Right cardiac atrium (tissue), 5 donors: ENCODE measurements at regions of chr13 and their contacts with region 1.

Region 1: DNA sequence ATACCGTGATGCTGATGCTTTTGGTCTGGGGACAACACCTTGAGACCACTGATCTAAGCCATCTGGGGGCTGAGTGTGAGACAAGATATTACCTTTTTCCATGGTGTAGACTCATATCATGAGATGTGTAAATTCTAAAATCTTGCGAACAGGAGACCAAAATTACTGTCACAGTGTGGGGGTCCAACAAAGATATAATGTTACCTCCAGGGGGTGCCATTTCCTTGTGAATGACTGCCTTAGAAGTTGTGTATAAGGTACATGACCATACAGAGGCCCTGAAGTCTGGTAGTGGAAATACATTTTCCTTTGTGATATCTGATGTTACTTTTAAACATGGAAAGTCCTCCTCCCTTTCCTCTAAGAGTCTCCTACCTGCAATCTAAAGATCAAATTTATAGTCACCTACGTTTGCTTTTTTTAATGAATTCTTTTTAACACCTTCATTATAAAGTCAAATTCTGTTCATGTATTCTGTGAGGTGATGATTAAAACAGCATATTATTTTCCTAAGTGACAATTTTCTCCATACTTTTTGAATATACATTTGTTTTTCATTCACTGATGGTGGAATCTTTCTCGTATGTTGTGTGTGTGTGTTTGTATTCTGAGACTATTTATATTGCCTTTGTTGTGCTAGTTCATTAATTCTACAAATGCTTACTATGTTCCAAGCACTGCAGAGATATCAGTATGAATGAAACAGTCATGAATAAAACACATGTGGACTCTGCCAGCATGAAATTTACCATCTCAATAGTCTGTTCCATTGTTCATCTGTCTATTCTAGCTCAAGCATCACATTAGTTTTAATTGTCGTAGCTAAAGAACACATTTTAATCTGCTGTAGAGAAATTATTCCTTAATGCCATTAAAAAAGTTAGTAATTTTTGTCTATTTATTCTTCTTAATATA is 113.7 kb downstream of the RFC3 start:
- DNase-seq: no peak
- ATAC-seq: peak; percentile 70 to 79
- H3K4me3 ChIP-seq: no peak overlapping the region
- H3K27ac ChIP-seq: no peak overlapping the region
- H3K4me1 ChIP-seq: peaks cover 2% of the 10 kb centered on the region
- H3K27me3 ChIP-seq: no peaks in the 10 kb centered on the region

Region 2: GRCh38 chr13:33723772-33724435 is 207.8 kb before region 1 on chr13:
- intact Hi-C with region 1: no loop called
- DNase-seq: peak; percentile 68 to 82 (median 69)
- ATAC-seq: peak; percentile 82 to 84
- H3K4me3 ChIP-seq: no peak overlapping the region
- H3K27ac ChIP-seq: no peak overlapping the region
- H3K4me1 ChIP-seq: peaks cover 2% of the 10 kb centered on the region
- H3K27me3 ChIP-seq: no peaks in the 10 kb centered on the region

Region 3: DNA sequence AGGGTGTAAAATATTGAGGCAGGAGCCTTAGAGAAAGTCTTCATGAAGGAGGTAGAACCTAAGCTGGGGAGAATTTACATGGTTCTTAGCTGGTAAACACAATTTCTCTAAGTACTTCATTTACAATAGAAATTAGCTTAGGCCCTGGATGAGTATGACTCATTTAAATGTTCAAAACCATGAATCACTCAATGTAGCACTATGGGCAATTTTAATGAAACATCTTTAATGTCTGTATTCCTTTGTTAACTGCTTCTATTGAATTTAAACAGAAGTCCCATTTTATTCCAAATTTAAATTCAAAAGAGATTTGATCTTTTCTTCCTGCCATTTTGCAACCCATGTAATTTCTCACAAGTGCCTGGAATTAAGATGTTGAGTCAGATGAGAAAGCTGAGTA is 138.4 kb after region 1 on chr13:
- intact Hi-C with region 1: loop called in 2 of 4 experiments (anchors 5 to 10 kb)
- DNase-seq: no peak
- ATAC-seq: no peak
- H3K4me3 ChIP-seq: no peak overlapping the region
- H3K27ac ChIP-seq: no peak overlapping the region
- H3K4me1 ChIP-seq: no peaks in the 10 kb centered on the region
- H3K27me3 ChIP-seq: no peaks in the 10 kb centered on the region

Region 4: GRCh38 chr13:34076943-34077703 is 145.5 kb after region 1 on chr13:
- intact Hi-C with region 1: loop called in 2 of 4 experiments (anchors 5 to 10 kb)
- DNase-seq: no peak
- ATAC-seq: peak in 1 of 2 donors; percentile 50
- H3K4me3 ChIP-seq: no peak overlapping the region
- H3K27ac ChIP-seq: no peak overlapping the region
- H3K4me1 ChIP-seq: peaks cover 3% of the 10 kb centered on the region
- H3K27me3 ChIP-seq: no peaks in the 10 kb centered on the region

Region 5: DNA sequence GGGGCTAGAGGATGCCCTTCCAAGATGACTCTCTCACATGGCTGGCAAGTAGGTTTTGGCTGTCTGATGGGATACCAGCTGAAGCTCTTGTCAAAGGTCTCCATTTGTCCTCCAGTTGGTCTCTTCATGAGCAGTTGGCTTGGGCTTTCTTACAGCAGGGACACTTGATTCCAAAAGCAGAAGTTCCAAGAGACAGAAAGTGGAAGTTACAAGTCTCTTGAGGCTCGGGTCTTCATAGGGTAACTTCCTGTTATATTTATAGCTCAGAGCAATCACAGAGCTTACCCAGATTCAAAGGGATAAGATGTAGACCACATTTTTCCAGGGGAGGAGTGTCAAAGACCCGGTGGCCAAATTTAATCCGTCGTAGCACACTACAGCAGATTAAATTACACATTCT is 326.3 kb after region 1 on chr13:
- intact Hi-C with region 1: no loop called
- DNase-seq: no peak
- ATAC-seq: peak; percentile 11 to 22
- H3K4me3 ChIP-seq: no peak overlapping the region
- H3K27ac ChIP-seq: no peak overlapping the region
- H3K4me1 ChIP-seq: peaks cover 1% of the 10 kb centered on the region
- H3K27me3 ChIP-seq: no peaks in the 10 kb centered on the region

Region 6: GRCh38 chr13:35157143-35157755 is 1225.6 kb after region 1 on chr13:
- intact Hi-C with region 1: loop called in 3 of 4 experiments (anchors 5 to 10 kb)
- DNase-seq: no peak
- ATAC-seq: peak in 1 of 2 donors; percentile 66
- H3K4me3 ChIP-seq: no peak overlapping the region
- H3K27ac ChIP-seq: no peak overlapping the region
- H3K4me1 ChIP-seq: no peaks in the 10 kb centered on the region
- H3K27me3 ChIP-seq: no peaks in the 10 kb centered on the region

Region 7: GRCh38 chr13:35164324-35164932 is 1232.8 kb after region 1 on chr13:
- intact Hi-C with region 1: loop called in 3 of 4 experiments (anchors 5 to 10 kb)
- DNase-seq: no peak
- ATAC-seq: peak in 1 of 2 donors; percentile 66
- H3K4me3 ChIP-seq: no peak overlapping the region
- H3K27ac ChIP-seq: no peak overlapping the region
- H3K4me1 ChIP-seq: no peaks in the 10 kb centered on the region
- H3K27me3 ChIP-seq: no peaks in the 10 kb centered on the region